PC-9 (cell line): ENCODE measurements at regions of chr6 and their contacts with region 1.

Region 1: GRCh38 chr6:80457439-80457933 is 351.0 kb downstream of the BCKDHB start:
- DNase-seq: peak; percentile 49 to 64
- H3K4me3 ChIP-seq: no peak overlapping the region
- H3K27ac ChIP-seq: no peak overlapping the region
- H3K4me1 ChIP-seq: peaks cover 41% of the 10 kb centered on the region
- H3K27me3 ChIP-seq: no peaks in the 10 kb centered on the region
- CTCF ChIP-seq: no peak

Region 2: DNA sequence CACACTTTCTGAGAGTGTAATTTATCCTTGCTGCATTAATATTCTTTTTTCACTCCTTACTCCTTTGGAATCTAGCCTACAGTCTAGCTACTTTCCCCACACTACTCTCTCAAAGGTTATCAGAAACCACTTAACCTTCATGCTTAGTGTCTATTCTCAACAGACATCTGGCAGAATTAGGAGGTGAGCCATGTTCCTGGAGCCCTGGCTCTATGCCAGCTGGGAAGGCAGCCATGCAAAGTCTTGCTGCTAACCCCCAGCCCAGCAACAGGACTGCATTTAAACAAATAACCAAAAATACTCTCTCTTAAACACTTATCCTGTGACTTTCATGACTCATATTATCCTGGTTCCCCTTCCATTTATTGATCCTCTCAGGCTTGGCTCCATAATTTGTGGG is 90.8 kb before region 1 on chr6:
- CTCF ChIA-PET with region 1: no interaction called
- POLR2A ChIA-PET with region 1: no interaction called
- intact Hi-C with region 1: loop called (anchors 10 kb)
- DNase-seq: no peak
- H3K4me3 ChIP-seq: no peak overlapping the region
- H3K27ac ChIP-seq: no peak overlapping the region
- H3K4me1 ChIP-seq: no peaks in the 10 kb centered on the region
- H3K27me3 ChIP-seq: no peaks in the 10 kb centered on the region
- CTCF ChIP-seq: no peak

Region 3: DNA sequence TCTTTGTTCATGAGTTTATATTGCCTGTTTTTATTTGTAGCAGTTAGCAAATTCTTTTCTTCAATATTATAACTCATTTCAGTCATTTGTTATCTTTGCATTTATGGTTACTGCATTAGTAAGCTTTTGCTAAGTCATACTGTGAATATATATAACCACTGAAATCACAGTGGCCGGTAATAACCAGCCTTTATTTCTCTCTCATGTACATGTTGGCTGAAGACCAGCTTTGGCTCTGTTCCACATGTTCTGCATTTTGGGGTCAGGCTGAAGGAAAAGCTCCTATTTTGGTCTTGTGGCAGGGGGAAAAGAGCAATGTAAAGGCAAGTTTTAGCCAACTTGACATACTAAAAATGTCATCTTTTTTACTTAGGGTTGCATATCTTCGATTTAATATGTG is 74.7 kb before region 1 on chr6:
- CTCF ChIA-PET with region 1: no interaction called
- POLR2A ChIA-PET with region 1: no interaction called
- intact Hi-C with region 1: no loop called
- DNase-seq: no peak
- H3K4me3 ChIP-seq: no peak overlapping the region
- H3K27ac ChIP-seq: no peak overlapping the region
- H3K4me1 ChIP-seq: no peaks in the 10 kb centered on the region
- H3K27me3 ChIP-seq: no peaks in the 10 kb centered on the region
- CTCF ChIP-seq: no peak

Region 4: DNA sequence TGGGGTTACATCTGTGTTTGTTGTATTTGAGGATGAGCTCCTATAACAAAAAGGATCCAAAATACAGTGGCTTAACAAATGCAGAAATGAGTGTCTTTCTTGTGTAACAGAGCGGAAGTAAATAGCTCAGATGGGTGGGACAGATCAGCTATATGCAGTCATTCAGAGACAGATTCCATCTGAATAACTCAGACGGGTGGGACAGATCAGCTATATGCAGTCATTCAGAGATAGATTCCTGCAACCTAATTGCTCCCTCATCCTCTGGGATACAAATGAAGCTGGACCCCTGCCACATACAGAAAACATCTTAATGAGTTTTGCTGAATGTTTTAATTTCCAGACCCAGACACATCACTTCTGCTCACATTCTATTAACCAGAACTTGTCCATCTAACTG is 18.7 kb before region 1 on chr6:
- CTCF ChIA-PET with region 1: no interaction called
- POLR2A ChIA-PET with region 1: no interaction called
- intact Hi-C with region 1: loop called (anchors 1 kb)
- DNase-seq: peak; percentile 30 to 64
- H3K4me3 ChIP-seq: no peak overlapping the region
- H3K27ac ChIP-seq: peak overlapping the region; percentile 91
- H3K4me1 ChIP-seq: peaks cover 41% of the 10 kb centered on the region
- H3K27me3 ChIP-seq: no peaks in the 10 kb centered on the region
- CTCF ChIP-seq: no peak

Region 5: DNA sequence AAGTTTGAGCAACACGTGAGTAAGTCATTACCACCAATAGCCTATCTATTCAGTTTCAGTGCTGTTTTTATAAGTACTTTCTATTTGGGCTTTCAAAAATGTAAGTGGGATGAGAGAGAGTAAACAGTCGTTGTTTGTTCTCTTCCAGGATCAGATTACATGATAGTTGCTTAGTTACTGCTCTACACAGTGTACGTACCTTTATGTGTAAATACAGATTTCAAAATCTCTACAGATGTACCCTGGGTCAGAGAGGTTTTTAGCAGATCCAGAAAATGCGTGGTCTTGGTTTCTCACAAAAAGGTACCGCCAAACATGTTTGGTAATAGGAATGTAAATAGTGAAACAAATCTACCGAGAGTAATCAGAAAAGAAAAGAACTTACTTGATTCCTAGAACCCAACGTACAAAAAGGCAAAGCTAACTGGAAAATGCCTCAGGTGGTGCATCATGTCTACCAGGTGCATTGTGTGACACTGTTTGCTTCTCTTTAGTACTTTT is 70.1 kb after region 1 on chr6:
- CTCF ChIA-PET with region 1: no interaction called
- POLR2A ChIA-PET with region 1: no interaction called
- intact Hi-C with region 1: loop called (anchors 1 kb)
- DNase-seq: peak; percentile 24 to 91
- H3K4me3 ChIP-seq: peak overlapping the region; percentile 37; the same call in 1 of the 2 replicates
- H3K27ac ChIP-seq: peak overlapping the region; percentile 36
- H3K4me1 ChIP-seq: peaks cover 23% of the 10 kb centered on the region
- H3K27me3 ChIP-seq: no peaks in the 10 kb centered on the region
- CTCF ChIP-seq: no peak

Region 6: DNA sequence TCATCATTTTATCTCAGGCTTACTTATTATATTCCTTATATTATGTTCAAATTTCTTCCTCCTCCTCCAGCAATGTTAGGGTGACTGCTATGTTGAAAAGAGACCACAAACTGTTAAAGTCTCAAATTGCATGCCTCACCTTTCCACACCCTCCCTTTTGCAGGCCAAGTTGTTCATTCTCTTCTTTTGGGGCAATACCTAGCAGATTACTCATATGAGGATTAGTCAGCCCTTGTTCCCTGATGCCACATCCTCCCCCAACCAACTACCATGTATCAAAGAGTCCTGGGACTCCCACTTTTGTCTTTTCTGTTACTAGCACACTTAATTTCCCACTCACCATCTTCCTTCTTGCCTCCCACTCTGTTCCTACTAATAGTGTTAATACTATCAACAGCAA is 83.7 kb after region 1 on chr6:
- CTCF ChIA-PET with region 1: no interaction called
- POLR2A ChIA-PET with region 1: no interaction called
- intact Hi-C with region 1: loop called (anchors 1 kb)
- DNase-seq: peak; percentile 62 to 84
- H3K4me3 ChIP-seq: no peak overlapping the region
- H3K27ac ChIP-seq: peak overlapping the region; percentile 66
- H3K4me1 ChIP-seq: peaks cover 16% of the 10 kb centered on the region
- H3K27me3 ChIP-seq: no peaks in the 10 kb centered on the region
- CTCF ChIP-seq: no peak